T-cell (primary cell): ENCODE measurements at regions of chr7 and their contacts with region 1.

Region 1: DNA sequence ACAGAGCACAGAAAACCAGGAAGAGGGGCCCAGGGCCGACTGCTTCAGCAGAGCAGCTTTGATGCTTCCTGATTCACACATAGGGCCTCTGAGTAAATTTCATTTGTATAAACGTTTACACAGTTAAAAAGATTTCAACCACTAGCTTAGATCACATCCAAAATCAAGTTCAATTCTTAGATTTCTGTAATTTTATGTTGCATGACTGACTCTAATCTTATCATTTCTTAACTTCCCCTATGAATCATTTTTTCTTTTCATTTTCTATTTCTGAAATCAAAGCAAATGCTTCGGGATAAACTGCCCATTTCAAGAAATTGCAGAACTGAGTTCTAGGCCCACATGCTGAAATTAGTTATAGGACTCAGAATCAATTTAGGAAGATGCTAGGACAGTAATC is 224.7 kb downstream of the INHBA start:
- DNase-seq: no peak
- ATAC-seq: no peak
- H3K4me3 ChIP-seq: no peak overlapping the region
- H3K4me3 Mint-ChIP-seq: no peak overlapping the region
- H3K27ac ChIP-seq: no peak overlapping the region
- H3K27ac Mint-ChIP-seq: no peak overlapping the region
- H3K4me1 ChIP-seq: no peaks in the 10 kb centered on the region
- H3K4me1 Mint-ChIP-seq: no peaks in the 10 kb centered on the region
- H3K27me3 ChIP-seq: no peaks in the 10 kb centered on the region
- H3K27me3 Mint-ChIP-seq: no peaks in the 10 kb centered on the region

Region 2: GRCh38 chr7:41268878-41269277 is 209.3 kb before region 1 on chr7:
- CTCF ChIA-PET with region 1: no interaction called
- POLR2A ChIA-PET with region 1: no interaction called
- DNase-seq: no peak
- ATAC-seq: no peak
- H3K4me3 ChIP-seq: no peak overlapping the region
- H3K4me3 Mint-ChIP-seq: no peak overlapping the region
- H3K27ac ChIP-seq: no peak overlapping the region
- H3K27ac Mint-ChIP-seq: no peak overlapping the region
- H3K4me1 ChIP-seq: no peaks in the 10 kb centered on the region
- H3K4me1 Mint-ChIP-seq: no peaks in the 10 kb centered on the region
- H3K27me3 ChIP-seq: no peaks in the 10 kb centered on the region
- H3K27me3 Mint-ChIP-seq: no peaks in the 10 kb centered on the region

Region 3: GRCh38 chr7:41436139-41436538 is 42.0 kb before region 1 on chr7:
- CTCF ChIA-PET with region 1: interaction called in 1 of 2 experiments, 10 read pairs
- POLR2A ChIA-PET with region 1: no interaction called
- DNase-seq: no peak
- ATAC-seq: no peak
- H3K4me3 ChIP-seq: no peak overlapping the region
- H3K4me3 Mint-ChIP-seq: no peak overlapping the region
- H3K27ac ChIP-seq: no peak overlapping the region
- H3K27ac Mint-ChIP-seq: no peak overlapping the region
- H3K4me1 ChIP-seq: no peaks in the 10 kb centered on the region
- H3K4me1 Mint-ChIP-seq: no peaks in the 10 kb centered on the region
- H3K27me3 ChIP-seq: no peaks in the 10 kb centered on the region
- H3K27me3 Mint-ChIP-seq: no peaks in the 10 kb centered on the region